ENCODE measurements at regions of chr22 and their contacts with region 1.

Region 1: GRCh38 chr22:31272522-31273446 is 19.5 kb downstream of the PIK3IP1 start:
- DNase-seq: peak; percentile 62 to 77
- H3K4me3 ChIP-seq: no peak overlapping the region
- H3K27ac ChIP-seq: peak overlapping the region in 1 of 2 donors; percentile 6
- H3K4me1 ChIP-seq: peaks cover 0 to 5% (median 0%) of the 10 kb centered on the region in 4 donors
- H3K27me3 ChIP-seq: no peaks in the 10 kb centered on the region
- CTCF ChIP-seq: peak; percentile 68 to 72

Region 2: DNA sequence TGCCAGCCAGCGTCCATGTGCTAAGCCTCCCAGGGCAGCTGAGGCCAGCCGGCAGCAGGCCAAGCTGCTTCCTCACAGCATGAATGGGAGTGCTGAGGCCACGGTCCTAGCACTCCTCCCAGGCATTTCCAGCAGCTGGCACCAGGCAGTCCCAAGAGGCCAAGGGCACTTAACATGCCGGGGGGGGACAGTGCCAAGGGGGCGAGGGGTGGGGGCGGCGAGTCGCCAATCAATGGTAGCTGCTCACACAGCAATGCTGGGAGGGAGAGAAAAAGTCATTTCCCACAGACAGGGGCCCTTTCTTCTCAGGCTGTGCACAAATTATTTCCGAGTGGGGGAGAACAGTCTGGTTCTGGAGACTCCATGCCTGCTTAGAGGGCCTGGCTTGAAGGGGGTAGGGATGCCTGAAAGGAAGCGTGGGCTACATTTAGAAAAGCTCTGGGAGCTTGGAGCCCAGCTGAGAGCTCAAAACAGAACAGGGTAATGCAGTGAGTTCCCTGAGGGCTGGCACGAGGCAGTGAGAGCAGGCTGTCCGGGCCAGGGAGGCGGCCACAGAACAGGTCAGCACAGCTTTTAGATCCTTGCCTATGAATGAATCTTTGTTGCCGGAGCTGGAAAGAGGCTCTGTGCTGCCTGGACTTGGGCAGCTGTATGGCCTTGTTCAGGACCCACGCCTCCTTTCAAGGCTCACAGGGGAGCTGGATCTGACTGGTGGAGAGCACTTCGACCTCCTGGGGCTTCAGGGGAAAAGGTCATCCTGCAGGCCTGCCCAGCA is 931.7 kb before region 1 on chr22:
- intact Hi-C with region 1: no loop called
- DNase-seq: peak; percentile 44 to 89
- H3K4me3 ChIP-seq: no peak overlapping the region
- H3K27ac ChIP-seq: peak overlapping the region; percentile 54 to 66
- H3K4me1 ChIP-seq: peaks cover 0 to 31% (median 22%) of the 10 kb centered on the region in 4 donors
- H3K27me3 ChIP-seq: no peaks in the 10 kb centered on the region
- CTCF ChIP-seq: no peak

Region 3: DNA sequence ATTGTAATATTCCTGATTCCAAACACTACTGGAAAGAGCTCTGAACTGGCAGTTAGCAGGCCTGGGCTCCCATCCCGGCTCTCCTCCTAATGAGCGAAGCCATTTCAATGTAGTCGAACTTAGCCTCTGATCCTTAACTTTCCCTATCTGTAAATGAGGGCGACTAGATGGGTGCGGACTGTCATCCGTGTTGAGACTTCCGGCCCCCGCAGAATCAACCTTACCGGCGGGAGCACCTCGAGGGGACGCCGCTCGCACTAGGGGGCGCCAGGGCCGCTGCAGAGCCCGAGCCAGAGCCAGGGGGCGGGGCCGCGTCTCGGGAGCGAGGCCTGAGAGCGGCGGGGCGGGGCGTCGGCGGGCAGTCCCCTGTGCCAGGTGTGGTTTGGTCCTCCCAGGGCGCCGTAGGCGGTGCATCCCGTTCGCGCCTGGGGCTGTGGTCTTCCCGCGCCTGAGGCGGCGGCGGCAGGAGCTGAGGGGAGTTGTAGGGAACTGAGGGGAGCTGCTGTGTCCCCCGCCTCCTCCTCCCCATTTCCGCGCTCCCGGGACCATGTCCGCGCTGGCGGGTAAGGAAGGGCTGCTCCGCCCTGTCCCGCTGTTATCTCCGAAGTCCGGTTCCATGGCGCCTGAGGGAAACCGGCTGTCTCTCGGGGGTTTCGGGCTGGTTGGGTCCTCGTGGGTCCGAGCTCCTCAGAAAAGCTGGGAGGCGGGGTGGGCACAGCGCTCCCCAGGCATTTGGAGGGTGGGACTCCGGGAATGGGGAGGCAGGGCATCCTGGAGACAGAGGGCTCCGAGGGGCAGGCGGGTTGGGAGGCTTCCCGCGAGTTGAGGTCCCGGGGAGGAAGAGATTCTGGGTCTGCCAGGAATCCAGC is 60.7 kb before region 1 on chr22 and contains the start of gene LIMK2:
- intact Hi-C with region 1: loop called (anchors 1 kb)
- DNase-seq: peak; percentile 91 to 95
- H3K4me3 ChIP-seq: peak within 1 kb of the TSS; percentile 74 to 93
- H3K27ac ChIP-seq: peak within 1 kb of the TSS; percentile 67 to 69
- H3K4me1 ChIP-seq: peaks cover 0 to 25% (median 19%) of the 10 kb centered on the region in 4 donors
- H3K27me3 ChIP-seq: no peaks in the 10 kb centered on the region
- CTCF ChIP-seq: peak; percentile 56 to 86

Region 4: GRCh38 chr22:31367426-31367825 is 94.6 kb after region 1 on chr22:
- intact Hi-C with region 1: no loop called
- DNase-seq: no peak
- H3K4me3 ChIP-seq: no peak overlapping the region
- H3K27ac ChIP-seq: no peak overlapping the region
- H3K4me1 ChIP-seq: no peaks in the 10 kb centered on the region
- H3K27me3 ChIP-seq: no peaks in the 10 kb centered on the region
- CTCF ChIP-seq: no peak

Measured in tibial artery (tissue), 4 donors.